HAP-1 (cell line): ENCODE measurements at regions of chr5 and their contacts with region 1.

Region 1: DNA sequence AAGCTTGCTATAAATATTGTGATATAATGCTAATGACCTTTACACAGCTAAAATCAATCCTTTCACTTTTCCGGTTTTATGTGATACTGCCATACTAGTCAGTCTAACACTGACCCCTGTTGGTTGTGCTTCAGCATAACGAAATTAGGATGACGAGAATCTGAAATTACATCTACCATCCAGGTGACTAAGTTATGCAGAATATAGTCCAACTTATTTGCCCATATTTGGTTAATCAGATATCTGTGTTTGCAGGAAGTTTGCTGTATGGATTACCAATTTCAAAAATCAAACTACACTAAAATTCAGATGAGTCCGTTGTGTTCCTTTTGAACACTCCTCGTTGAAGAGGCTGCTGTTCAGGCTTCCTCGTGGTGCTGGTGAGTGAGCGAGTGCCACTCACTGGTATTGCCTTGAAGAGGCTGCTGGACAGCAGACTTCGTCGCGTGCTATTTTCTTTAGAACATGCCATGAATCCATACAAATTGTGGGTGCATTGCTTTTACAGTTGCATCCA is 32.5 kb downstream of the TENT4A start:
- DNase-seq: peak in 1 of 2 experiments; percentile 35
- H3K4me3 ChIP-seq: no peak overlapping the region
- H3K4me1 ChIP-seq: no peaks in the 10 kb centered on the region
- H3K27me3 ChIP-seq: no peaks in the 10 kb centered on the region

Region 2: GRCh38 chr5:5473224-5473623 is 1272.5 kb before region 1 on chr5:
- in situ Hi-C with region 1: loop called (anchors 25 kb)
- DNase-seq: no peak
- H3K4me3 ChIP-seq: no peak overlapping the region
- H3K4me1 ChIP-seq: no peaks in the 10 kb centered on the region
- H3K27me3 ChIP-seq: no peaks in the 10 kb centered on the region

Region 3: DNA sequence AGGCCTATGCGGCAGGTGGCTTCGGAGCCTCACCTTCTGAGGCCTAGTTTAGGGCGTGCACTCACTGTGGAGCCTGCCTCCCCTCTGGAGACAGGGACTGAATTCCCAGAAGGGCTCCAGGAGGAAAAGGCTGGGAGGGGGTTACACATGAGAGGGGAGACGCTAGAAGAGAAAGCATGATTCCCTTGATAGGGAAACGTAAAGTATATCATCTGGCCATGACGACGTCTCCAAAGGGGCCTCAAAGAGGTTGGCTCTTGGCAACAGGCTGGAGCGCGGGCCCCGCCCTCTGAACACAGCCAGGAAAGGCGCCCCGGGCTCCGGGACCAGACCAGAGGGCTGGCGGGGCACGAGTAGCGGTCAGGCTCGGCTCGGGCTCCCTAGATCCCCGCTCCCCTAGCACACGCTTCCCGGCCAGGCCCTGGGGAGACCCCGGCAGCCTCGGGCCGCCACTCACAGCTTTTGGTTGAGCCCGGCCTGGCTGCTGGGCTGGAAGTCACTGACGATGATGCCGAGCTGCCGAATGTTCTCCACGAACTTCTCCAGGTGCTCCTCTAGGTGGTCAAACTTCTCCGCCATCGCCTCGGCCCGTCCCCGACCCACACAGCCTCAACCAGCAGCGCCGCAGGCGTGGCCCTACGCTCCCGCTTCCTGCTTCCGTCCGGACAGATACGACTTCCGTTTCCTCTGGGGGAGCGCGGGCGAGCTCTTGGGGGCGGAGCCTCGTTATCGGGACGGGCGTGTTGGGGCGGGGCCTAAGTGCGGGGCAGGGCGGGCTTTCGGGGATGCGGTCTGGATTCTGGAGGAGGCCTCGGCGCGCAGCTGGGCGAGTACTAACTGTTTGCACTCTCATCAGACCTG is 367.6 kb before region 1 on chr5 and contains the start of gene MED10:
- in situ Hi-C with region 1: loop called (anchors 10 kb)
- DNase-seq: peak; percentile 92 to 97
- H3K4me3 ChIP-seq: peak within 1 kb of the TSS; percentile 91
- H3K4me1 ChIP-seq: peaks cover 5% of the 10 kb centered on the region
- H3K27me3 ChIP-seq: no peaks in the 10 kb centered on the region